Endothelial cell of umbilical vein (primary cell): ENCODE measurements at regions of chr7 and their contacts with region 1.

Region 1: DNA sequence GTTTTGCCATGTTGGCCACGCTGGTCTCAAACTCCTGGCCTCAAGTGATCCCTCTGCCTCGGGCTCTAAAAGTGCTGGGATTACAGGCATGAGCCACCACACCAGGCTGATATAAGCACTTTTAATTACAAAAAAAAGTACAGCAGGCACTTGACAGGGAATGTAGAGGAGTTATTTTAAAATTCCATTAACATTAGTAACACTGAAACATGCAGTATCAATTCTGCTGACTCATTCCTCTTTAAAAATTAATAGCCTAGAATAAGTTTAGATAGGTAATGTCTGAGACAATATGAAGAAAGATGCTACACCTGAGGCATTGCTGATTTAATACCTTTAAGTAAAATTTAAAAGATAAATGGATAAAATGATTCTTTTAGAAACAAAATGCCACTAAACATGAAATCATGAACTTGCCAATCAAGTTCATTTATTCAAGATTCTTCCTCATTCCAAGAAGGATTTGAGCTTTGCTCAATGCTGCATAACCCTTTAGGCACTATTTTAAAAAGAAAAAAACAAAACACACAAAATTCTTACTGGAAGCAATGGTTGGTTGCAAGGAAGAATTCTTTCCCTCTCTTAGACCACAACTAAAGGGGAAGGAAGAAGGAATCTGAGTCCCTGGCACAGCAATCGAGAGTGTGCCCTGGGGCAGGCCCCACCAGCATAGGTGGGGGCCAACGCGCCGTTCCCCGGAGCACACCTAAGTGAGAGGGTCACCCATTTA is 26.7 kb downstream of the ESYT2 start:
- DNase-seq: no peak
- H3K4me3 ChIP-seq: no peak overlapping the region
- H3K27ac ChIP-seq: no peak overlapping the region
- H3K4me1 ChIP-seq: no peaks in the 10 kb centered on the region
- H3K27me3 ChIP-seq: no peaks in the 10 kb centered on the region
- CTCF ChIP-seq: no peak
- POLR2A ChIP-seq: no peak

Region 2: DNA sequence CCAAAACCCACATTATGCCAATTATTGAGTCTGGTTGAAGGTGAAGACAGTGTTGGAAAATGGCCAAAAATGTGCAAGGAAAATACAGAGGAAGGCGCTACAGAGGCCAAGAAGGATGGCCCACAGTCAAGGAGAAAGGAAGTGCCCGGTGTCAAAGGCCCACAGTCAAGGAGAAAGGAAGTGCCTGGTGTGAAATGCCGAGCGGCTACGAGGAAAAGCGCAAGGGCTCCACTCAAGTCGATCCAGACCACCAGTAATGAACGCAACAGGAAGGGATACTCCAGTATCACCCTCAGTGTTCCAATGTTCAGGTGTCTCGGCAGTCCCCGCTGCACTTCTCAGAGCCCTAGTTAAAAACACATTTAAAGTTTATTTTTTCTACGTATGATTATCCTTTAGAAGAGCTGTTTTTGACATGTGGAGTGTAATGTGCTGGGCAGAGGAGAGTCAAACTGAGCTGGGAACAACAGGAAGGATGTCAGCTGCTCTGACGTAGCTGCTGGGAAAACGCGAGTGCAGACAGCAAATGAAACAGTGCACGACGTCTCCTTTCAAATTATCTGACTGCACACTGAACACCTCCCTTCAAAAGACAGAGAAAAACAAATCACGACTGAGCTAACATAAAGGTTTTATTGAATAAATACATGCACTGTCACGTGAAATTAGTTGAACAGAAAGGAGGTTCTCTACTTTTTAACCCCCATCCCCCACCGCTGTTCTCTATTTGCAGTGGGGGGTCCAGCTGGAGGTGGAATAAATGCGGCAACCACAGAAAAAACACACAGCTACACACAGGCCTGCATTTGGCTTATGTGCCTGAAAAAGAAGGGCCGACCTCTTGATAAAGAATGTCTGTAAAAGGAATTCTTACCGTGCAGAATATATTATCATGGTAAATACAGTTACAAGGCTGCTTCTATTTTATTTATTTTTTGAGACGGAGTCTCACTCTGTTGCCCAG is 72.0 kb before region 1 on chr7:
- CTCF ChIA-PET with region 1: no interaction called
- POLR2A ChIA-PET with region 1: no interaction called
- dilution Hi-C with region 1: no loop called
- intact Hi-C with region 1: no loop called
- DNase-seq: no peak
- H3K4me3 ChIP-seq: no peak overlapping the region
- H3K27ac ChIP-seq: no peak overlapping the region
- H3K4me1 ChIP-seq: peaks cover 3% of the 10 kb centered on the region
- H3K27me3 ChIP-seq: no peaks in the 10 kb centered on the region
- CTCF ChIP-seq: no peak
- POLR2A ChIP-seq: no peak

Region 3: GRCh38 chr7:158789842-158790241 is 12.8 kb before region 1 on chr7:
- CTCF ChIA-PET with region 1: no interaction called
- POLR2A ChIA-PET with region 1: no interaction called
- dilution Hi-C with region 1: no loop called
- intact Hi-C with region 1: loop called (anchors 1 kb)
- DNase-seq: no peak
- H3K4me3 ChIP-seq: no peak overlapping the region
- H3K27ac ChIP-seq: no peak overlapping the region
- H3K4me1 ChIP-seq: no peaks in the 10 kb centered on the region
- H3K27me3 ChIP-seq: no peaks in the 10 kb centered on the region
- CTCF ChIP-seq: no peak
- POLR2A ChIP-seq: no peak

Region 4: DNA sequence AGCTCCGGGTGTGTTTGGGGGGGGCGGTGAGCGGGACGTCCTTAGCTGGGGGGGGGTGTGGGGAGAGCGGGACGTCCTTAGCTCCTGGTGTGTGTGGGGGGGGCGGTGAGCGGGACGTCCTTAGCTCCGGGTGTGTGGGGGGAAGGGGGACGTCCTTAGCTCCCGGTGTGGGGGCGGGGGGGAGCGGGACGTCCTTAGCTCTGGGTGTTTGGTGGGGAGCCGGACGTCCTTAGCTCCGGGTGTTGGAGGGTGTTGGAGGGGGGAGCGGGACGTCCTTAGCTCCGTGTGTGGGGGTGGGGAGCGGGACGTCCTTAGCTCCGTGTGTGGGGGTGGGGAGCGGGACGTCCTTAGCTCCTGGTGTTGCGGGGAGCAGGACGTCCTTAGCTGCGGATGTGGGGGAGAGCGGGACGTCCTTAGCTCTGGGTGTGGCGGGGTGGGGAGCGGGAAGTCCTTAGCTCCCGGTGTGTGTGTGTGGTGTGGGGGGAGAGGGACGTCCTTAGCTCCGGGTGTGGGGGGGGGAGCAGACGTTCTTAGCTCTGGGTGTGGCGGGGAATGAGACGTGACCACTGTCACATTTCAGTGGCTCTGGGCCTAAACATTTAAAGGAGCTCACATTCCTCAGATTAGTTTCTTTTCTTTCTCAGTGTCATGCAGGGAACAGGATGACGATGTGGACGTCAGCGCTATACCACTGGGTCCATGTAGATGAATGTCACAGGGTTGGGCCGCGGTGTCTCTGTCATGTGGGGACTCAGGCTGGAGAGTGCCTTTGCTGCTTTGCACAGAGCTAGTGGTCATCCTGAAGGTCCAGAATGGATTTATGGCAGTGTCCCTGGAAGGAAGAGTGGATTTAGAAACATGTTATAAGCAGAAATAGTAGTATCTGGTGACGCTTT is 61.2 kb after region 1 on chr7:
- CTCF ChIA-PET with region 1: no interaction called
- POLR2A ChIA-PET with region 1: no interaction called
- dilution Hi-C with region 1: no loop called
- intact Hi-C with region 1: no loop called
- DNase-seq: peak; percentile 41
- H3K4me3 ChIP-seq: peak overlapping the region; percentile 4 to 54 (median 33)
- H3K27ac ChIP-seq: no peak overlapping the region
- H3K4me1 ChIP-seq: peaks cover 4% of the 10 kb centered on the region
- H3K27me3 ChIP-seq: no peaks in the 10 kb centered on the region
- CTCF ChIP-seq: no peak
- POLR2A ChIP-seq: no peak